HepG2 (cell line): ENCODE measurements at regions of chr12 and their contacts with region 1.

Region 1: DNA sequence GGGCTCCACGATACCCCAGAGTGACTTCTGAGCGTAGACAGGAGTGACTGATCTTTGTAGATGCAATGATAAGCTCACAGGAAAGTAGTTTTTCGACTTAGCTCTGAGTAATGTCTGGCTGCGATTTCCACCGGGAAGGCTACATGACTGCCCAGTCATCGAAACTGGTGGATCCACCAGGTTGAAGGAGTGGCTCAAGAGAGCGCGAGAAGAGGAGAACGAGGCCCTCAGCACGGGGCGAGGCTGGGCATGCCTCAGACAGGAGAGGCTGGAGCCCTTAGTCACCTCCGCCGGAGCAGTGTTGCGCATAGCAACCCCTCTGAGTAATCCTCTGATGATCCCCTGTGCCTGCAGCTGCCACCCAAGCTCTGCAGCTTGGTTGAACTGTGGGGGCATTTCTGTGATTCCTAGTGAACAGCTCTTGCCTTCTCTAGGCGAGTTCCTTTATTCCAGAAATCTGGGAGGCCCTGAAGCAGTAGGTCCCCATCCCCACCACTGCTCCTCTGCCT is 25.6 kb downstream of the ELK3 start:
- DNase-seq: peak; percentile 50
- ATAC-seq: peak; percentile 60
- H3K4me3 ChIP-seq: peak overlapping the region; percentile 19 to 47 (median 29); a peak in 4 of 6 replicates
- H3K27ac ChIP-seq: peak overlapping the region; percentile 60
- H3K4me1 ChIP-seq: peaks cover 68% of the 10 kb centered on the region
- H3K27me3 ChIP-seq: no peaks in the 10 kb centered on the region
- CTCF ChIP-seq: no peak
- EP300 ChIP-seq: no peak
- POLR2A ChIP-seq: no peak
- RAD21 ChIP-seq: no peak

Region 2: DNA sequence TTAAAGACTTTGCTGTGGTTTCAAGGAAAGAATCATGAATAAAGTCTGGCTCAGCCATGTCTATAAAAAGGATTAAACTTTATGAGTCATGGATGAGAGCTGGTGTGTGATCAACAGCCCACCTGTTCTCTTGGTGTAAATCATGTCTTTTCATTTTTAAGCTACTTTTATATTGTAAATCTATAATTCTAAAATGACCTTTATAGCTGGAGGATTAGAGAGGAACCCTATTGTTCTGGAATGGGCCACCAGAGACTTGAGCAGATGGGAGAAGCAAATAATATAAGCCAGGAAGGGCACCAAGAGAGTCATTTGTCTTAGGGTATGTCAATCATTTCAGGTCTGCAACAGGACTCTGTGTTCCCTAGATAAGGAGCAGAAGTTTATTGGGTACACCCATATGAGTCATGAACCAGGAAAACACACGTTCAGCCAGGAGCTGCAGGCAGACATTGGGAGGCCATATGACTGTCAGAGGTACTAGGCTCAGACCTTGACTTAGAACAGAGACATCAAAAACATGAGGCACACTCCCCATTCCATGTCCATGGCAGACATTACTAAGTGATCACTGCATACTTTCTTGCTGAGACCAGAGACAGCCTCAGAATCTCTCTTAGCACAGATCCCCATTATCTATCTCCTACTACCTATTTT is 1265.6 kb before region 1 on chr12:
- CTCF ChIA-PET with region 1: no interaction called
- POLR2A ChIA-PET with region 1: no interaction called
- in situ Hi-C with region 1: no loop called
- intact Hi-C with region 1: no loop called
- DNase-seq: no peak
- ATAC-seq: no peak
- H3K4me3 ChIP-seq: no peak overlapping the region
- H3K27ac ChIP-seq: no peak overlapping the region
- H3K4me1 ChIP-seq: no peaks in the 10 kb centered on the region; the same call in 1 of the 2 replicates
- H3K27me3 ChIP-seq: no peaks in the 10 kb centered on the region
- CTCF ChIP-seq: no peak
- EP300 ChIP-seq: no peak
- POLR2A ChIP-seq: no peak
- RAD21 ChIP-seq: no peak

Region 3: GRCh38 chr12:96015672-96016071 is 204.1 kb before region 1 on chr12:
- CTCF ChIA-PET with region 1: no interaction called
- POLR2A ChIA-PET with region 1: interaction called, 4 read pairs
- in situ Hi-C with region 1: no loop called
- intact Hi-C with region 1: loop called (anchors 5 kb)
- DNase-seq: no peak
- ATAC-seq: peak; percentile 84
- H3K4me3 ChIP-seq: no peak overlapping the region
- H3K27ac ChIP-seq: no peak overlapping the region
- H3K4me1 ChIP-seq: no peaks in the 10 kb centered on the region
- H3K27me3 ChIP-seq: no peaks in the 10 kb centered on the region
- CTCF ChIP-seq: peak; percentile 49
- EP300 ChIP-seq: no peak
- POLR2A ChIP-seq: no peak
- RAD21 ChIP-seq: no peak

Region 4: DNA sequence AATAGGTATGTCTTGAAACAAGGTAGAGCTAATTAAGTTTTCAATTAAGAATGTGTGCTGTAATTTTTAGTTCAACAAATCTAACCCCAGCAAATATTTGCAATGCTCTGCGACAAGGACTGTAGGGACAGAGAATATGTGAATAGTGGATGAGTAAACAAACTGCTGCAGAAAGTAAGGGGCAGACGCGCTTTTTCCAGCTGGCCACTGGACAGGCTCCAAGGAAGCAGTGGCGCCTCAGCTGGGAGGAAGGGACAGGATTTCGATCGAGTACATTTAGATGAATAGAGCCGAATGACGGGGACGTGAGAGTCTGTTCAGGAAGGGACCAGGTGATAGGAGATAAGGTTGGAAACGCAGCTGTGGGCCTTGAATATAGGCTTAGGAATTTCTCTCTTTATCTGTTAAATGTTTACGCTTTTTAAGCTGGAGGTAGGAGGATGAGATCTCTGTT is 43.7 kb after region 1 on chr12:
- CTCF ChIA-PET with region 1: no interaction called
- POLR2A ChIA-PET with region 1: no interaction called
- in situ Hi-C with region 1: no loop called
- intact Hi-C with region 1: loop called (anchors 10 kb)
- DNase-seq: peak; percentile 90
- ATAC-seq: peak; percentile 98
- H3K4me3 ChIP-seq: no peak overlapping the region
- H3K27ac ChIP-seq: peak overlapping the region; percentile 40
- H3K4me1 ChIP-seq: peaks cover 34% of the 10 kb centered on the region
- H3K27me3 ChIP-seq: no peaks in the 10 kb centered on the region
- CTCF ChIP-seq: peak; percentile 30
- EP300 ChIP-seq: peak; percentile 41 to 74; a peak in 2 of 4 replicates
- POLR2A ChIP-seq: no peak
- RAD21 ChIP-seq: peak; percentile 23; the same call in 1 of the 2 replicates

Region 5: DNA sequence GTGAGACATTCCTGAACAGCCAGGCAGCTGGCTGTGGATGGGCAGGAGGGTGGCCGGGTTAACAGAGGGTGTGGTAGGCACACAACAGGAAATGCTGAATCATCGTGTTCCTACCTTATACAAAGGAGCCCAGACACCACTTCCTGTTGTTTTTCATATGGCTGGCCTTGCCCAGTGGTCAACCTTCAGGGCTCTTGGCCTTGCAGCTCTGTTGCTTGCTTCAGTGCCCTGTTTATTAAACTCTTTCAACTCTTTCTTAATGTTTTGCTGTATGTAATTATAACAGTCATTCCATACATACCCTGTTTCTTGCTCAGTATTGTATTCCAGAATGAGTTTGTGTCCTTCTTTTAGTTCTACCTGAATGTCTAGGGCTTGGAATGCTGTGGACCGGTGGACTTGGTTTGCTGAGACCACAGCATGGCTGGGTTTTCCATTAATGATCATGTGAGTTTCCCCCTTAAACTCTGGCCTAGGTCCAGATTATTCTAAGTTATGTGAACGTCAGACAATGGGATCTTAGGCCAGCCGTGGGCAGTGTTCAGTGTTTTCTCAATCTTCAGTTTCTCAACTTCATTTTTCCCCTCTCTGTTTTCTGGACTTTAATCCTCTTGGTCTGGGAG is 281.5 kb after region 1 on chr12:
- CTCF ChIA-PET with region 1: no interaction called
- POLR2A ChIA-PET with region 1: no interaction called
- in situ Hi-C with region 1: loop called (anchors 25 kb)
- intact Hi-C with region 1: loop called (anchors 5 kb)
- DNase-seq: peak; percentile 55
- ATAC-seq: peak; percentile 63
- H3K4me3 ChIP-seq: peak overlapping the region in 2 of 3 experiments; percentile 11 to 12; a peak in 1 of 6 replicates
- H3K27ac ChIP-seq: no peak overlapping the region
- H3K4me1 ChIP-seq: peaks cover 26% of the 10 kb centered on the region
- H3K27me3 ChIP-seq: no peaks in the 10 kb centered on the region
- CTCF ChIP-seq: no peak
- EP300 ChIP-seq: no peak
- POLR2A ChIP-seq: no peak
- RAD21 ChIP-seq: no peak

Region 6: DNA sequence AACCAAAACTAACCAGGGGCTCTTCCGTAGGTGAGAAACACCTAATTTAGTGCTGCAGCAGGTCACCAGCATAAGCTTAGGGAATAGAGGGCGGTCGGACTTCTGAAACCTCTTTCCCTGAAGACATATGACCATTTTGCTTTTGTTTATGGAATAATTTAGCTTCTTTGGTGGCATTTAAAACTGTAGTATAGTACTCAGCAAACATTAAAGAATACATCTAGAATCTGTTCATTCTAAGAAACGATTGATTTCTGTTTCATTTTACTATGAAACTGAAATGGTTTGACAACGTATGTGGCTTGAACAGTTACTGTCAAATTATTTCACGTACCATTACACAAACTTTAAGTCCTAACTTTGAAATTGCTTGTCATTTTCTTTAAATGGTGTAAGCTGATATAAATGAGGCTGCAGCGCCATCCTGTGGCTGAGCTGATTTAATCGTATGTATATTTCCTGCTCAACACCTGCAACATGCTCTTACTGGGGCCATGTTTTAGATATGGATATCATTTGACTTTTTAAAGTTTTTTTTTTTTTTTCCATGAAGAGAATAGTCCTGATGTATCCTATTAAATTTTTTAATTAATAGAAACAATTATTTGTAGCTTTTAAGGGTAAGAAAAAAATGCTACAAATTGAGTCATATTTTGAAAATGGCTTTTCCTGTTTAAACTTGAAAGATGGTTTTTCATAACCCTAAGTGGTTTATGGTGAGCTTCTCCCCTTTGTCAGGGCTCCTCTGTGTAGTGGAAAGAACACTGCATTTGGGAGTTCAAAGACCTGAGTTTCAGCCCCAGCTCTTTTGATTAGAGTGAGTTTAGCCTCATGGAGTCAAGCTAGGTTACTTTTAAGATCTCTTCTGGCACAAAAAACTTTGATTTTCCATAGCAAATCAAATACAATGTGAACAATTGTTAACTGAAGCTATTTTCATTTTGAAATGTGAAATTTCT is 297.0 kb after region 1 on chr12:
- CTCF ChIA-PET with region 1: no interaction called
- POLR2A ChIA-PET with region 1: no interaction called
- in situ Hi-C with region 1: loop called (anchors 25 kb)
- intact Hi-C with region 1: loop called (anchors 2 kb)
- DNase-seq: peak; percentile 43
- ATAC-seq: peak; percentile 59; the same call in 2 of the 3 replicates
- H3K4me3 ChIP-seq: no peak overlapping the region
- H3K27ac ChIP-seq: no peak overlapping the region
- H3K4me1 ChIP-seq: no peaks in the 10 kb centered on the region
- H3K27me3 ChIP-seq: peaks cover 1 to 4% of the 10 kb centered on the region in 2 experiments; a peak in 1 of 5 replicates
- CTCF ChIP-seq: peak; percentile 78
- EP300 ChIP-seq: no peak
- POLR2A ChIP-seq: no peak
- RAD21 ChIP-seq: peak; percentile 63; the same call in 1 of the 2 replicates